Activated B cell treated with CpG ODN at 0.5 μM for 24 hours (primary cell): ENCODE measurements at regions of chrX and their contacts with region 1.

Region 1: DNA sequence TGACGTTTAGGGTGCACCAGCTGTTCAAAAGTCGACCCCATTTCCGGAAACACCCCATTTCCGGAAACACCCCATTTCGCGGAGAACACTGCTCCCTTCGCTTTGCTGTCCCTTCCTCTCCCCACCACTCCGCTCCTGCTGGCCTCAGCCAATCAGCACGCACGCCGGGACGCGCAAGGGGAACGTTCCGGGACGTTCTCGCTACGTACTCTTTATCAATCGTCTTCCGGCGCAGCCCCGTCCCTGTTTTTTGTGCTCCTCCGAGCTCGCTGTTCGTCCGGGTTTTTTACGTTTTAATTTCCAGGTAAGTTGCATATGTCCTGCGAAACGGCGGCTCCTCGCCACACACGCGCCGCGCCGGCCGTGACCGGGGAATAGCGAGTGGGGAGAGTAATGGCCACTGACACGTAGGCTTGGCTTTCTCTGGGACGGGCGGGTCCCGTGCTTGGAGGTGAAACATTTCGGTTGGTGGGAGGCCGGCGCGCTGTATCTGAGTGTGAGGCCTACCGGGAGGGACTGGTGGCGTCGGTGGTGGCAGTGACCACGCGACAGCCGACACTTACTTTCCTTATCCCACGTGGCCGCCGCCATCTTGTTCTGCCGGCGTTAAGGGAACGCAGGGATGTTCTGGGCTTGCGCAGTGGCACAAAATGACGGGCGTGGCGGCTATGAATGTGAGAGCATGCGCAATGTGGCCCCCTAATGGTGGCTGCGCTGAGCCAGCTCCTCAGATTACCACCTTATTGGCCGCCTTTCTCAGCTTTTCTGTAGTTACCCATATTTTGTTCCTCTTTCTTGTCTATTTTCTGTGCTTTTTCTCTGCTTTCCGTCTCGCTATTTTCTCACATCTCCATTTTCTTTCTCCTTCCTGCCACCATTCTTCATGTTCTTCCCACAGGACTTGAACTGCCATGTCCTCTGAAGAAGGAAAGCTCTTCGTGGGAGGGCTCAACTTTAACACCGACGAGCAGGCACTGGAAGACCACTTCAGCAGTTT is at the start of gene RBM3:
- DNase-seq: peak; percentile 74
- ATAC-seq: peak; percentile 94
- H3K4me3 Mint-ChIP-seq: peak within 1 kb of the TSS; percentile 99
- H3K27ac Mint-ChIP-seq: peak within 1 kb of the TSS; percentile 100
- H3K4me1 Mint-ChIP-seq: peaks cover 26% of the 10 kb centered on the region
- H3K27me3 Mint-ChIP-seq: no peaks in the 10 kb centered on the region
- CTCF ChIP-seq: no peak
- total RNA-seq, gene RBM3: 381 and 394 TPM in 2 replicates

Region 2: DNA sequence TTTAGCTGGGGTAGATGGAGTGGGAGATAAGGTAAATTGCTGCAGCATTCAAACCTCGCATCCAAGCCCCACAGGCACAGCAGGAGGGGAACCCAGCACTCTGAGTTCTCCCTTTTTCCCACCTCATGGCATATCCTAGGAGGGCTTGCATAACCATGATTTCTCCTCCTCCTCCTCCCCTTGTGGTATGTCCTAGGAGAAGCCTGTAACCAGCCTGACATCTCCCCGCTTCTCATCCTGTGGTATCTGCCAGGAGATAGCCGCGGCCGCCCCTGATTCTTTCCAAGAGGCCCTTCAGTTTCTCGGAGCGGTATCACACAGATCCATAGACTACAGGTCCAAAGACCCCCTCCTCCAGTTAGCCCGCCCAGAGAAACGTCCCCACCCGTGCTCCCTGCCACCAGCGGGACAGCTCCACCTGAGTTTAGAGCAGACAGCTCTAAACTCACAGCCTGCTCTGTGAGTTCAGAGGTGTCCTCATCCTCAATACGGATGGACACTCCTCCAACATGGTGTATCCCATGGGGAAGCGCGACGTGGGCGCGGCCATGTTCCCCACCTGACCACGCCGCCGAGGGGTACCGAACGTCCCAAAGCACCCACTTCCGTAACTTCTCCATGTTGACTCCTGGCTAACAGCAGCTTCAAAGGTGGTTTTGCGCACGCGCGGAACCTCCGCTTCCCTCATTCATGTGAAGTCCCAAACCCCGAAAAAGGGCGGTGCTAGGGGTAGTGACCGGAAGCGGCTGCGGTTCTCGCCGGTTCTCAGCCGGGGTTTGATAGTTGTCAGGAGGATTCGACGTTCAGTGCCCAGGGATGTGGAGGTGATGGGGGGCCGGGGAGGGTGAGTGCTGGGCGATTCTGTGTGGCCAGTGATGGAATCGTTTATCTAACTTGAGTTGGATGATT is 738.1 kb before region 1 on chrX and contains the start of gene ZNF81:
- CTCF ChIA-PET with region 1: no interaction called
- POLR2A ChIA-PET with region 1: interaction called, 4 read pairs
- intact Hi-C with region 1: loop called (anchors 10 kb)
- DNase-seq: peak; percentile 76
- ATAC-seq: peak; percentile 95
- H3K4me3 Mint-ChIP-seq: peak within 1 kb of the TSS; percentile 93
- H3K27ac Mint-ChIP-seq: peak within 1 kb of the TSS; percentile 93
- H3K4me1 Mint-ChIP-seq: peaks cover 21% of the 10 kb centered on the region
- H3K27me3 Mint-ChIP-seq: no peaks in the 10 kb centered on the region
- CTCF ChIP-seq: no peak
- total RNA-seq, gene ZNF81: 11.0 and 15.3 TPM in 2 replicates

Region 3: DNA sequence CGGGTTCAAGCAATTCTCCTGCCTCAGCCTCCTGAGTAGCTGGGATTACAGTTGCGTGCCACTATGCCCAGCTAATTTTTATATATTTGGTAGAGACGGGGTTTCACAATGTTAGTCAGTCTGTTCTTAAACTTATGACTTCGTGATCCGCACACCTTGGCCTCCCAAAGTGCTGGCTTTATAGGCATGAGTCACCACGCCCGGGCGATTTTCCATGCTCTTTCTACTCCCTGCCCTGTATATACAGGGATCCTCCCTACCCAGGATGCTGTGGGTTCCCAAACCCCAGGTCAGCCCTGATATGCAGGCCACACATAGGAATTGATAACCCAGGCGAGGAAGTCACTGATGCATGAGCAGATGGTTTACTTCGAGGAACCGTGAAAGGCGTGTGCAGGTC is 409.3 kb before region 1 on chrX:
- CTCF ChIA-PET with region 1: no interaction called
- POLR2A ChIA-PET with region 1: no interaction called
- intact Hi-C with region 1: no loop called
- DNase-seq: no peak
- ATAC-seq: no peak
- H3K4me3 Mint-ChIP-seq: no peak overlapping the region
- H3K27ac Mint-ChIP-seq: no peak overlapping the region
- H3K4me1 Mint-ChIP-seq: no peaks in the 10 kb centered on the region
- H3K27me3 Mint-ChIP-seq: peaks cover 6% of the 10 kb centered on the region
- CTCF ChIP-seq: no peak

Region 4: GRCh38 chrX:48508400-48509244 is 65.9 kb before region 1 on chrX and contains the start of gene PORCN:
- CTCF ChIA-PET with region 1: interaction called, 3 read pairs
- POLR2A ChIA-PET with region 1: interaction called, 17 read pairs
- intact Hi-C with region 1: loop called (anchors 2 kb)
- DNase-seq: peak; percentile 65
- ATAC-seq: peak; percentile 88
- H3K4me3 Mint-ChIP-seq: peak within 1 kb of the TSS; percentile 91
- H3K27ac Mint-ChIP-seq: peak within 1 kb of the TSS; percentile 91
- H3K4me1 Mint-ChIP-seq: peaks cover 11% of the 10 kb centered on the region
- H3K27me3 Mint-ChIP-seq: no peaks in the 10 kb centered on the region
- CTCF ChIP-seq: no peak
- total RNA-seq, gene PORCN: 7.8 and 9.8 TPM in 2 replicates

Region 5: GRCh38 chrX:48597353-48598264 is 23.0 kb after region 1 on chrX and contains the start of gene WDR13:
- CTCF ChIA-PET with region 1: no interaction called
- POLR2A ChIA-PET with region 1: interaction called, 12 read pairs
- intact Hi-C with region 1: loop called (anchors 1 kb)
- DNase-seq: peak; percentile 79
- ATAC-seq: peak; percentile 83
- H3K4me3 Mint-ChIP-seq: peak within 1 kb of the TSS; percentile 97
- H3K27ac Mint-ChIP-seq: peak within 1 kb of the TSS; percentile 99
- H3K4me1 Mint-ChIP-seq: peaks cover 7% of the 10 kb centered on the region
- H3K27me3 Mint-ChIP-seq: no peaks in the 10 kb centered on the region
- CTCF ChIP-seq: no peak
- total RNA-seq, gene WDR13: 73.4 and 75.8 TPM in 2 replicates

Region 6: GRCh38 chrX:48631350-48632090 is 57.0 kb after region 1 on chrX:
- CTCF ChIA-PET with region 1: no interaction called
- POLR2A ChIA-PET with region 1: no interaction called
- intact Hi-C with region 1: no loop called
- DNase-seq: peak; percentile 17
- ATAC-seq: peak; percentile 79
- H3K4me3 Mint-ChIP-seq: peak overlapping the region; percentile 7
- H3K27ac Mint-ChIP-seq: no peak overlapping the region
- H3K4me1 Mint-ChIP-seq: peaks cover 3% of the 10 kb centered on the region
- H3K27me3 Mint-ChIP-seq: no peaks in the 10 kb centered on the region
- CTCF ChIP-seq: no peak

Region 7: GRCh38 chrX:48737213-48737938 is 162.8 kb after region 1 on chrX:
- CTCF ChIA-PET with region 1: no interaction called
- POLR2A ChIA-PET with region 1: interaction called, 3 read pairs
- intact Hi-C with region 1: loop called (anchors 1 kb)
- DNase-seq: peak; percentile 65
- ATAC-seq: peak; percentile 97
- H3K4me3 Mint-ChIP-seq: peak overlapping the region; percentile 91
- H3K27ac Mint-ChIP-seq: peak overlapping the region; percentile 94
- H3K4me1 Mint-ChIP-seq: peaks cover 15% of the 10 kb centered on the region
- H3K27me3 Mint-ChIP-seq: no peaks in the 10 kb centered on the region
- CTCF ChIP-seq: no peak

Region 8: DNA sequence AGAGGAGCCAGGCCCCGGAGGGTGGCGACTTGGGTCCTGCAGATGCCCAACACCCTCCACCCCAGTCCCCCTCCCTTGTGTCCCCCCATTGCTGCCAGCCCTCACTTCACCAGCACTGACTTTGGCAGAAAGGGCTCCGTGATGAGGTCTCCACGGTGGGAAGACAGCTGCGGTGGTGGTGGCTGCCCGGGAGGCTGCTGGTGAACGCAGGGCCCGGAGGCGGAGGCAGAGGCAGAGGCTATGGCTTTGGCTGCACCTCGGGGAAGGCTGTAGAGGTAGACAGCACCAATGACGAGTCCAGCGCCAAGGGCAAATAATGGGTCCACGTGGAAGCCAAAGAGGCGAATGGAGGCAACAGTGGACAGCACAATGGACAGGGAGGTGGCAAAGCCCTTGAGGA is 330.1 kb after region 1 on chrX:
- CTCF ChIA-PET with region 1: no interaction called
- POLR2A ChIA-PET with region 1: no interaction called
- intact Hi-C with region 1: no loop called
- DNase-seq: no peak
- ATAC-seq: no peak
- H3K4me3 Mint-ChIP-seq: no peak overlapping the region
- H3K27ac Mint-ChIP-seq: no peak overlapping the region
- H3K4me1 Mint-ChIP-seq: peaks cover 2% of the 10 kb centered on the region
- H3K27me3 Mint-ChIP-seq: no peaks in the 10 kb centered on the region
- CTCF ChIP-seq: no peak

Region 9: GRCh38 chrX:49002091-49002935 is 427.7 kb after region 1 on chrX and contains the start of gene GRIPAP1:
- CTCF ChIA-PET with region 1: no interaction called
- POLR2A ChIA-PET with region 1: interaction called, 10 read pairs
- intact Hi-C with region 1: no loop called
- DNase-seq: peak; percentile 52
- ATAC-seq: peak; percentile 88
- H3K4me3 Mint-ChIP-seq: peak within 1 kb of the TSS; percentile 99
- H3K27ac Mint-ChIP-seq: peak within 1 kb of the TSS; percentile 97
- H3K4me1 Mint-ChIP-seq: peaks cover 24% of the 10 kb centered on the region
- H3K27me3 Mint-ChIP-seq: no peaks in the 10 kb centered on the region
- CTCF ChIP-seq: no peak
- total RNA-seq, gene GRIPAP1: 97.3 and 117 TPM in 2 replicates